ENCODE measurements at regions of chr2 and their contacts with region 1.

Region 1: DNA sequence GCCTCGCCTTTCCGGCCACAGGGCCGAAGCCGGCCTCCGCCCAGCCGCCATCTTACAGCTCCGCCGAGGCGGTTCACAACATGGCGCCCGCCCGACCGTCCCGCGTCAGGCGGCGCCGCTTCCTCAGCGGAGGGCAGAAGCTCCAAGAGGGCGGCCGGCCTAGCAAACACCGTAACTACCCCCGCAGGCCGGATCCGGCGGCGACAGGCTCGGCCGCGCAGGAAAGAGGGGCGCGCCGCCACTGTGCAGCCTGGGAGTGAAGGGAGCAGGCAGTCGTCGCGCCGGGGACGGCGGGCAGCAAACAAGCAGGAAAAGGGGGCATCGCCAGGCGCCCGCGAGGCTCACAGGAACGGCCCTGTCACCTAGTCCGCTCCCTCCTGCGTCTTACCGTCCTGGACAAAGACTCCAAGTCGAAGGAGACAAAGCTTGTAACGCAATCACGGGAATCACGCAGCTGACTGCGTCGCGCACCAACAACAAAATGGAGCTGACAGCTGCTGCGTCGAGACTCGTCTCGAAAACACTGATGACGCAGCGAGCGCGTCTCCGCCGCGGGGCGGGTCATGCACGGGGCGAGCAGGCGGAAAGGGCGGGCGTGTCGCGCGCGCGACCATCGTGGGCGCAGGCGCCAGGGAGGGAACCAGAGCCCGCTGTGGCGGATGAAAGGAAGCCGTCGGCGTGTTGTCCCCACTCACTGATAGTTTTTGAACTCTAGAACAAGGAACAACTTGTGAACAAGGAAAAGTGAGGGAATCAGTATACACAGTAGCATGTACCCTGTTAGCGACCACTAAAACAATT is at the start of gene CLK1:
- DNase-seq: peak; percentile 98
- ATAC-seq: peak; percentile 77
- H3K4me3 Mint-ChIP-seq: peak within 1 kb of the TSS; percentile 87
- H3K27ac Mint-ChIP-seq: peak within 1 kb of the TSS; percentile 99
- H3K4me1 Mint-ChIP-seq: peaks cover 26% of the 10 kb centered on the region
- H3K27me3 Mint-ChIP-seq: no peaks in the 10 kb centered on the region
- total RNA-seq, gene CLK1: 86.4 to 99.3 TPM

Region 2: GRCh38 chr2:199955339-199956261 is 908.8 kb before region 1 on chr2 and contains the starts of genes MAIP1 and TYW5:
- CTCF ChIA-PET with region 1: no interaction called
- POLR2A ChIA-PET with region 1: no interaction called
- intact Hi-C with region 1: loop called in 1 of 2 experiments (anchors 10 kb)
- DNase-seq: peak; percentile 87
- ATAC-seq: peak; percentile 87
- H3K4me3 Mint-ChIP-seq: peak within 1 kb of the TSS; percentile 99
- H3K27ac Mint-ChIP-seq: peak within 1 kb of the TSS; percentile 95
- H3K4me1 Mint-ChIP-seq: peaks cover 50% of the 10 kb centered on the region
- H3K27me3 Mint-ChIP-seq: no peaks in the 10 kb centered on the region
- total RNA-seq, gene MAIP1: 26.1 to 27.5 TPM
- total RNA-seq, gene TYW5: 9.6 to 10.1 TPM

Region 3: GRCh38 chr2:200578778-200579177 is 285.6 kb before region 1 on chr2:
- CTCF ChIA-PET with region 1: no interaction called
- POLR2A ChIA-PET with region 1: no interaction called
- intact Hi-C with region 1: loop called in 1 of 2 experiments (anchors 5 kb)
- DNase-seq: no peak
- ATAC-seq: peak; percentile 83
- H3K4me3 Mint-ChIP-seq: no peak overlapping the region
- H3K27ac Mint-ChIP-seq: no peak overlapping the region
- H3K4me1 Mint-ChIP-seq: peaks cover 17% of the 10 kb centered on the region
- H3K27me3 Mint-ChIP-seq: no peaks in the 10 kb centered on the region

Region 4: DNA sequence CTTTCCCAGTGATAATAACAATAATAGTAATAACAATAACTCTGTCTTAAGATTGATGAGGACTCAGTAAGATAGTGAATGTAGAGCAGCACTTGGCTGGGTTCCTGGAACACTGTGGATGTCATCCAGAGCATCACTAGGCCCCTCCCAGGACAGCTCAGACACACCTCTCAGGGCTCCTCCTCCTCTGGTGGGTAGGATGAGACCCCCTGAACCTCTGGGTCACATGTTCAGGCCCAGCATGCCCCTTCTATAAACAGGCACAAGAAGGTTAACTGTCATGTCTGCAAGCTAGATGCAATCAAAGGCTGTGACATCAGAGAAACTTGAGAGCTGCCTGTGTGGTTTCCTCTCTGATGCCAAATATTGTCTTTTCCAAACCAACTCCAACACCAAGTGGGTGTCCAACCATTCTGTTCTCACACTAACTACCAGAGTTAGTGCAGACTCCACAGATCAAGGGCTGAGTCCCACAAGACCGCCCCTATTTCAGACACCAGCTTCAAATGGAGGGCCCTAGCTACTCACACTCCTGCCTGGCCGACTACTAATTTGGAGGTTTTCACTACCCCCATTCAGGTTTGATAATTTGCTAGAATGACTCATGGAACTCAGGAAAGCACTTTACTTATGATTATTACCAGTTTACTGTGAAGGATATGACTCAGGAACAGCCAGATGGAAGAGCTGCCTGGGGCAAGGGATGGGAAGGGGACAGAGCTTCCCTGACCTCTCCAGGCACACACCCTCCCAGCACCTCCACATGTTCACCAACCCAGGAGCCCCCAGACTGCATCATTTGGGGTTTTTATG is 99.0 kb before region 1 on chr2:
- CTCF ChIA-PET with region 1: no interaction called
- POLR2A ChIA-PET with region 1: interaction called, 11 read pairs
- intact Hi-C with region 1: loop called (anchors 1 to 2 kb)
- DNase-seq: peak; percentile 69
- ATAC-seq: peak; percentile 90
- H3K4me3 Mint-ChIP-seq: peak overlapping the region; percentile 7
- H3K27ac Mint-ChIP-seq: peak overlapping the region; percentile 82
- H3K4me1 Mint-ChIP-seq: peaks cover 30% of the 10 kb centered on the region
- H3K27me3 Mint-ChIP-seq: no peaks in the 10 kb centered on the region

Region 5: GRCh38 chr2:200963124-200963917 is 98.9 kb after region 1 on chr2 and contains the start of gene ORC2:
- CTCF ChIA-PET with region 1: interaction called, 4 read pairs
- POLR2A ChIA-PET with region 1: no interaction called
- intact Hi-C with region 1: loop called in 1 of 2 experiments (anchors 1 kb)
- DNase-seq: peak; percentile 95
- ATAC-seq: peak; percentile 95
- H3K4me3 Mint-ChIP-seq: peak within 1 kb of the TSS; percentile 92
- H3K27ac Mint-ChIP-seq: peak within 1 kb of the TSS; percentile 96
- H3K4me1 Mint-ChIP-seq: peaks cover 65% of the 10 kb centered on the region
- H3K27me3 Mint-ChIP-seq: no peaks in the 10 kb centered on the region
- total RNA-seq, gene ORC2: 68.5 to 80.5 TPM

Region 6: DNA sequence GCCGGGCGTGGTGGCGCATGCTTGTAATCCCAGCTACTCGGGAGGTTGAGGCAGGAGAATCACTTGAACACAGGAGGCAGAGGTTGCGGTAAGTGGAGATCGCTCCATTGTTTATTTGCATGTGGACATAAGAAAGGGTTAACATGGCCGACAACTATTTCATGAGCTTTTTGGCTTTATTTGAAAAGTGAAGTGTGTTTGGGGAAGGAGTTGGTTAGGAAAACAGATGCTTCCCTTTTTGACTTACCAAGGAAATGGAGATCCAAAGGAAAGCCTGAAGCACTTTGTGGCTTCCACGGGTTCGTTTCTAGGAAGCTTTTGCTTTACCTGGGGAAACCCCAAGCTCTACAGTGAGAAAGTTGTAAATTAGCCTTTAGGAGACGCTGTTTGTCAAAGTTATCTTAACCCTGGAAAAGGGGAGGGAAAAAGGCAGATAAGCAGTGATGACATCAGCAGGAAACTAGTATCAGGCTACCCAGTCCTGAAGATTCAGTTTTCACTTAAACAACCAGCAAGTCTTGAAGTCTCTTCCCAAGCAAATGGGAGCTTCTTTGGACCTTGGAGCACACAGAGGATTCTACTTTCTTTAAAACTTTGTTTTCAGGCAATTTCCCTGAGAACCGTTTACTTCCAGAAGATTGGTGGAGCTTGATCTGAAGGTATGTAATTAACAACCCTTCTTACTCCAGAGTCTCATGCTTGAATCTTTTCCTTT is 318.4 kb after region 1 on chr2 and contains the start of gene CASP10:
- CTCF ChIA-PET with region 1: interaction called, 6 read pairs
- POLR2A ChIA-PET with region 1: no interaction called
- intact Hi-C with region 1: loop called in 1 of 2 experiments (anchors 1 kb)
- DNase-seq: no peak
- ATAC-seq: peak; percentile 66
- H3K4me3 Mint-ChIP-seq: peak within 1 kb of the TSS; percentile 86
- H3K27ac Mint-ChIP-seq: peak within 1 kb of the TSS; percentile 96
- H3K4me1 Mint-ChIP-seq: peaks cover 43% of the 10 kb centered on the region
- H3K27me3 Mint-ChIP-seq: no peaks in the 10 kb centered on the region
- total RNA-seq, gene CASP10: 12.2 to 16.8 TPM

Region 7: DNA sequence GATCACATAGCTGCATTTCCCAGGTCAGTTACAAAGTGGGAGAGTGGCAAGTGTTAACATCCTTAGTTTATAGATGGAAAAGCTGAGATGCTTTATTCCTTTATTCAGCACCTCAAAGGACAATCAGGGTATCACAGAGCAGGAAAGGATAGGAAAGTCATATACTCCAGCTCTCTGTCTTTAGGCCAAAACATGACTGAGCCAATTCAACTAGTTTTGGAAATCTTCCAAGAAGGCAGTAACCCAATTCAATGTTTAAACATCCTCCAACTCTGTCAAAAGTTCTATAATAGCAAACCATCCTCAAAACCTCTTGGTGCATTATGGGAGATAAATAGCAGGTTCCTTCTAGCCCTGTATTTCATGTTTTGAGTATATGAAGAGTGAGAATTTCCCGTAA is 421.1 kb after region 1 on chr2:
- CTCF ChIA-PET with region 1: no interaction called
- POLR2A ChIA-PET with region 1: no interaction called
- intact Hi-C with region 1: no loop called
- DNase-seq: no peak
- ATAC-seq: no peak
- H3K4me3 Mint-ChIP-seq: no peak overlapping the region
- H3K27ac Mint-ChIP-seq: no peak overlapping the region
- H3K4me1 Mint-ChIP-seq: peaks cover 11% of the 10 kb centered on the region
- H3K27me3 Mint-ChIP-seq: no peaks in the 10 kb centered on the region

Measured in activated CD4-positive, alpha-beta T cell treated with anti-CD3 and anti-CD28 coated beads for 36 hours (primary cell).